ENCODE measurements at regions of chr14 and their contacts with region 1.

Region 1: DNA sequence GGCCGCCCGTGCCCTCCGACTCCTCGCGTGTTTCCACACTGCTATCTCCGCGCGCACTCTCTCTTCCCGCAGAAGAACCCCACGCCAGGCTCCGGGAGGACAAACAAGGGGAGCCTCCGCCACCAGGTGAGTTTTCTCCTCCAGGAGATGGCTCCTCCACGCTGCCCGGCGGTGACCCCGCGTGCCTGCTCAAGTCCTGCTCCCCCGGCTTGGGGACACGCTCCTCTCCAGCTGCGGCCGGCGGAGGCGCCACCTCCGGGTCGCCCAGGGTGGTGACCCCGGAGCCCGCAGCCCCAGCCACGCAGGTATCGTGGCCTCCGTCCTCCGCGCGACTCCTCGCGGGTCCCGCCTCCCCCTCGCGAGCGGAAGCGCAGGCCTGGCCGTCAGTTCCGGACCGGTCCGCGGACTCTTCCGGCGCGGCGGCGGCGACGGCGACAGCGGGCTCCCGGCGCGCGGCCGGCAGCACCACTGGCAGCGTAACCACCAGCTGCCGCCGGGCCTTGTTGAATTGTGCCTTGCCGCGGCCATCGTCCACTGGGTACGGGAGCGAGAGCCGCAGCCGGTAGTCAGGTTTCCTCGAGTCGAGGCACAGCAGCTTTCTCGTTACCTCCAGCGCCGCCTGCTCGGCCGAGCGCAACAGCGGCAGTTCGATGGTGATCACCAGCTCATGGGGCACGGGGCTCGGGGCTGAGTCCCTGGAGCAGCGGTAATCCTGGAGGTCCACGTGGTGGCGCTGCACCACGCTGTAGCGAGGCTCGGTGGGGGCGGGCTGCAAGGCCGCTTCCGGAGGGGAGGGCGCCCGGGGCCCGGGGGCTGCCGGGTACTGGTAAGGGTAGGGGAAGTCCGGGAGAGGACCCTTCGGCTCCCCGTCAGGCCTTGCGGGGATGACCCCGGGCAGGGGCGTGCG is 1.2 kb downstream of the DNAAF2 start:
- H3K4me3 Mint-ChIP-seq: peak overlapping the region; percentile 94
- H3K27ac Mint-ChIP-seq: peak overlapping the region; percentile 87
- H3K4me1 Mint-ChIP-seq: peaks cover 40% of the 10 kb centered on the region
- H3K27me3 Mint-ChIP-seq: no peaks in the 10 kb centered on the region

Region 2: DNA sequence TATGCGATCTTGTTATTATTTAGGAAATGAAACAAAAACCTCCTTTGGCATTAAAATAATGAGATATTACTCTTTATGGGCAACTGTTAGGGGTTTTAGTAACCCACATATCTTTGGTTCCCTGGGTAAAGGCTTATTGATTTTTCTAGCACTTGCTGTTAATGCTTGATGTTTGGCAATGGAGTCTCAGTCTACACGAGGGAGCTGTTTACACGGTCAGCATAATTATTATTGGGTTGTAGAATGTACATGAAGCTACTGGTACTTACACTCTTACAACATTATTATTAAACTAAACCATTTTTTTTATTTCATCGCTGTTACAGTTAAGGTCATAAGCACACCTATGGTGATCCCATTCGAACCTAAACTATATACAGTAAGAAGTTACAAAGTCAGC is 59.9 kb before region 1 on chr14:
- intact Hi-C with region 1: no loop called
- H3K4me3 Mint-ChIP-seq: no peak overlapping the region
- H3K27ac Mint-ChIP-seq: no peak overlapping the region
- H3K4me1 Mint-ChIP-seq: no peaks in the 10 kb centered on the region
- H3K27me3 Mint-ChIP-seq: no peaks in the 10 kb centered on the region

Region 3: GRCh38 chr14:49598485-49599300 is 35.2 kb before region 1 on chr14 and contains the start of gene LRR1:
- intact Hi-C with region 1: no loop called
- H3K4me3 Mint-ChIP-seq: peak within 1 kb of the TSS; percentile 88
- H3K27ac Mint-ChIP-seq: peak within 1 kb of the TSS; percentile 98
- H3K4me1 Mint-ChIP-seq: peaks cover 25% of the 10 kb centered on the region
- H3K27me3 Mint-ChIP-seq: no peaks in the 10 kb centered on the region

Region 4: DNA sequence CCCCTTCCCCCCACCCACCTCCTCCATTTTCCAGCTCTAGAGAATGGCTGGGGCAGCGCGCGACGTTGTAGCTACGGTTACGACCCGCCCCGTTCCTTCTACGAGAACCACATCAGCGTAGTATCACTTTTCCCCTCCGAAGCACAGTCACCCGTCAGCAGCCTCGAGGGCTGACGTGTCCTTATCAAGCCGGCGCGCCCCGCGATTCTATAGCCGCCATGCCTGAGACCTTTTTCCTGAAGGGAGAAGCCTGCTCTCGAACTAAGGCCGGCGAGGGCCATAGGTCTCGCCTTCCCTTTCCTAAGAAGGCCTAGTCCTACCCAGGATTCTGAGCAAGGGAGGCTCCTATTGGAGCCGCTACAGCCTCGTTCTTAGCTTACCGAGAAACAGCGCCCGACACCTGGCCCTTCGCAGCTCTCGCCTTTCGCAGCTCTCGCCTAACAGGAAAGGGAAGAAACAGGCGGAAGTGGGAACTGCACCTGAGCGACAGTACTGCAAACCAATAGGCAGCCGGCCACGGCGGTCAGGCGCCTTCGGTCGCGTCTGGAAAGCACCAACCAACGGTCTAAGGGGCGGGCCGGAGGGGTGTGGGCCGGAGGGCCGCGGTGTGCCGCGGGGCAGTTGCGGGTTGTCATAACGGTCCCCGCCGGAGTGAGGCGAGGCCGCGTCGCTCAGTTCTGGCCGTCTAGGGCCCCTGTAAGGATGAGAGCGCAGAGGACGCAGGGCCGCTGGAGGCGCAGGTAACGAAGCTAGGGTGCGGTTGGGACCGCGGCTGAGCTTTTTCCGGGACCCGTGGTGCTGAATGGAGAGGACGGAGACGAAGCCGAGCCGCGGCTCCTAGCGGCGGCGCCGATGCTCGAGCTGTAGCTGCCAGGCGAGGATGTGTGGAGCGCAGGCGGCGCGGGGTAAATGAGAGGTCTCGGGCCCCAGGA is 13.4 kb before region 1 on chr14 and contains the starts of genes MGAT2 and RPL36AL:
- intact Hi-C with region 1: loop called (anchors 2 kb)
- H3K4me3 Mint-ChIP-seq: peak within 1 kb of the TSS; percentile 99
- H3K27ac Mint-ChIP-seq: peak within 1 kb of the TSS; percentile 100
- H3K4me1 Mint-ChIP-seq: peaks cover 27% of the 10 kb centered on the region
- H3K27me3 Mint-ChIP-seq: no peaks in the 10 kb centered on the region

Region 5: DNA sequence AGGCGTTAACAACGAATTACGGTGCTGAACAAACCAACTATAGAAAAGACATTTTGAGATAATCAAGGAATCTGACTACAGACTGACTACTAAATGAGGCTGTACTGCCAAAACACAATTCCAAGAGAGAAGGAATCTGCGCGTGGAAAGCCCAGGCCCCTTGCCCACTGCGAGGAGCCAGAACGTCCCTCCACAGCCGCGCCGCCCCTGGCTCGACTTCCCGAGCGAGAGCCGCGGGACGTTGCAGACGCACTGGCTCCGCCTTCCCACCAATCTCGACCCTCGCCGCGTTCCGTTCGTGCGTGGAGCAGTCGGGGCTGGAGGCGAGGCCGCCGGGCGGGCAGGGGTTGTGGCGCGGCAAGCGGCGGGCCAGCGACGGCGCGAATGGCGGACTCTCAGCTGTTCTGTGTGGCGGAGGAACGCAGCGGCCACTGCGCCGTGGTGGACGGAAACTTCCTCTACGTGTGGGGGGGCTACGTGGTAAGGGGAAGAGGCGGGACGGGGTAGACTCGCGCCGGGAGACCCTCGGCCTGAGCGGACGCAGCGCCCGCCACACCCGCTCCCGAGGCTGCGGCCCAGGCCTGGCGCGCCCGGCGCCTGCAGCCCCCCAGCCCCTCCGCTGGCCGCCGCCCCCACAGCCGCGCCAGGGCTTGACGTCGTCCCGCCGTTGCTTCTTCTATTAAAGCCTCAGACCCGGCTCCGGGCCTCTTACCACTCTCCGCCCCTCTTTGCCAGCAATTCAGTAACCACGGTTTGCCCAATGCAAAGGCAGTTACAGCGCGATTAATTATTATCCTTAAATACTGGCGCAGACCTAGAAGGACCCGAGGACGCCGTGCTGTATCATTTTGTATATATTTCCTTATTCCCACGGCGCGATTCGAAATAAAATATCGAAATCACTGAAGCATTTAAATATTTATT is 59.2 kb after region 1 on chr14 and contains the start of gene KLHDC1:
- intact Hi-C with region 1: loop called (anchors 5 kb)
- H3K4me3 Mint-ChIP-seq: peak within 1 kb of the TSS; percentile 75
- H3K27ac Mint-ChIP-seq: peak within 1 kb of the TSS; percentile 83
- H3K4me1 Mint-ChIP-seq: peaks cover 31% of the 10 kb centered on the region
- H3K27me3 Mint-ChIP-seq: no peaks in the 10 kb centered on the region

Region 6: GRCh38 chr14:49767562-49768300 is 133.8 kb after region 1 on chr14 and contains the start of gene KLHDC2:
- intact Hi-C with region 1: loop called (anchors 1 kb)
- H3K4me3 Mint-ChIP-seq: peak within 1 kb of the TSS; percentile 89
- H3K27ac Mint-ChIP-seq: peak within 1 kb of the TSS; percentile 95
- H3K4me1 Mint-ChIP-seq: peaks cover 33% of the 10 kb centered on the region
- H3K27me3 Mint-ChIP-seq: no peaks in the 10 kb centered on the region

Region 7: DNA sequence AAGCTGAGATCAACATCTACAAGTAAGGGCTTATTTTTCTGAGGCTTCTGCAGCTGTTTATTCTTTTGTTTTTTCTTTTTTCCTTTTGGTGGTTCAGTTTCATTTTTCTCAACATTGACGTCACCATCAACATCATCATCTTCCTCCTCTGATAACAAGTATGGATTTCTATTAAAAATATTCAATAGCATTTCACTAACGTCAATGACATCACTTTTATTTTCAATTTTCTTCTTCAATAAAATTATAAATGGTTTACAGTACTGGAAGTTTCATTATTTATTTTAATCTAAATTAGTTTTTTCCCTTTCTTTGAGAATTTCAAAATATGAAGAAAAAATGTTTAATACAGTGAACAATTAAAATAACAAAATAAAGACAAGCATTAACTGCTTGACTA is 194.7 kb after region 1 on chr14:
- intact Hi-C with region 1: loop called (anchors 5 kb)
- H3K4me3 Mint-ChIP-seq: no peak overlapping the region
- H3K27ac Mint-ChIP-seq: no peak overlapping the region
- H3K4me1 Mint-ChIP-seq: no peaks in the 10 kb centered on the region
- H3K27me3 Mint-ChIP-seq: no peaks in the 10 kb centered on the region

Region 8: GRCh38 chr14:50231475-50232275 is 597.8 kb after region 1 on chr14 and contains the start of gene SOS2:
- intact Hi-C with region 1: loop called (anchors 10 kb)
- H3K4me3 Mint-ChIP-seq: peak within 1 kb of the TSS; percentile 86
- H3K27ac Mint-ChIP-seq: peak within 1 kb of the TSS; percentile 91
- H3K4me1 Mint-ChIP-seq: peaks cover 25% of the 10 kb centered on the region
- H3K27me3 Mint-ChIP-seq: no peaks in the 10 kb centered on the region